B cell (primary cell): ENCODE measurements at regions of chr1 and their contacts with region 1.

Region 1: DNA sequence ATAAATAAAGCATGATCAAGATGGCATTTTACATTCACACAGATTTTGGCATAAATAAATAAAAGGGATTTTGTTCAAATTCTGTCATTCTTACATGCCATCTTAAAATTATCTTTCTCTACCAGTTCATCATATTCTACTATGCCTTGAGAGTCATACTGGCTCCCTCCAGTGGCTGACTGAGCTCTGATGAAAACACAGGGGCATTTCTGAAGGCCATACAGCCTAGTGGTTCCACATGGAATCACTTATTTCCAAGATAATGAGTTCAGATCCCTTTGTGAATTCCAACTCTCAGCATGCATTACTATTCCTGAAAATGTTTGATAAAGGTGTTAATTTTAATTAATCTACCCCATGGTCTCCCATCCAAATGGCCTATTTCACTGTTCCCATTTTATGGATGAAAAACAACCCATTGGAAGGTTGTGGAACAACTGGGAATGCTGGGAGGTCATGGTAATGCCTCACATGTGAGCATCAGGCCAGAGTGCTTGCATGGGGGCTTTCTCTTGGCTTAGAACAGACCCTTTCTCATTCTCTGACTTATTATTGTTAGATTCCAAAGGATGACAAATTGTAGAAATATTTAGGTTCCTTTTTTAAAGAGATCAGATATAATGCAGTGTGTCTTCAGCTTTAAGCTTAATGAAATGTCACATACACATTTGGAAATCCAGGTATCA is 622.4 kb upstream of the PKN2 start:
- DNase-seq: peak; percentile 47
- ATAC-seq: no peak
- H3K4me3 ChIP-seq: no peak overlapping the region
- H3K4me3 Mint-ChIP-seq: no peak overlapping the region
- H3K27ac ChIP-seq: no peak overlapping the region
- H3K27ac Mint-ChIP-seq: no peak overlapping the region
- H3K4me1 ChIP-seq: no peaks in the 10 kb centered on the region
- H3K4me1 Mint-ChIP-seq: peaks cover 3% of the 10 kb centered on the region
- H3K27me3 ChIP-seq: no peaks in the 10 kb centered on the region
- H3K27me3 Mint-ChIP-seq: no peaks in the 10 kb centered on the region
- CTCF ChIP-seq: peak; percentile 53

Region 2: DNA sequence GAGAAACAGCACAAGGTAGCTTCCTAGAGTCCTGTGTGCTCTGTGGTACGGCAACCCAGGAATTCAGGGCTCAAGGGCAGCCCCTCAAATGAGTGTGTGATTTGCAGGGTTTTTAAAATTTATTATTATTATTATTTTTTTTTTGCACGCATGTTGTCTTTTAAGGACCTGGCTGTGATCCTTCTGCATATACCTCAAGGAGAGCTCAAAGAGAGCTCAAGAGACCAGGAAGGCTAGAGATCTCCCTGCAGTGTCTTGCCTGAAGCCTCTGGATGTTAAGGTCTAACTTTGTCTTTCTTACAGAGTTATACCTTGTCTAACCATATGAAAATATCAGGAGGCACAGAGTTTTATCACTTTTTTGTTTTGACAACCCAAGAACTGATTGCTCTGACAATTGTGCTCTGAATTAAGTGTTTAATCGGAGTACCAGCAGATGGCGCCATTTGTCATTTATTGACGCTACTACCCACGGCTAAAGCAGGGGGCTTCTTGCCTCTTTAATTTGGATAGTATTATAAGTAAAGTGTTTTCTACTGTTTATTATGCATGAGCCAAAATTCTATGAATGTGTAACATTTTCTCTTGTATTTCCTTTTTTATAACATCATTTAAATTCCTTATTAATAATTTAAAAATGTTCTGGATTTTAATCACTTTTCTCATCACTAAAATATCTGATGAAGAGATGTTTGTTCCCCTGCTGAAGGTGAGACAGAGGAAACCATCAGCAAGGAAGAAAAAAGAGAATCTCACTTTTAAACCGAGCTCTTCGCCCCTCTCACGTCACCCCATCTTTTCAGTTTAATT is 768.7 kb before region 1 on chr1:
- CTCF ChIA-PET with region 1: interaction called, 20 read pairs
- POLR2A ChIA-PET with region 1: no interaction called
- intact Hi-C with region 1: loop called (anchors 1 kb)
- DNase-seq: peak; percentile 78
- ATAC-seq: peak; percentile 47
- H3K4me3 ChIP-seq: no peak overlapping the region
- H3K4me3 Mint-ChIP-seq: no peak overlapping the region
- H3K27ac ChIP-seq: no peak overlapping the region
- H3K27ac Mint-ChIP-seq: no peak overlapping the region
- H3K4me1 ChIP-seq: no peaks in the 10 kb centered on the region
- H3K4me1 Mint-ChIP-seq: no peaks in the 10 kb centered on the region
- H3K27me3 ChIP-seq: no peaks in the 10 kb centered on the region
- H3K27me3 Mint-ChIP-seq: peaks cover 13% of the 10 kb centered on the region
- CTCF ChIP-seq: peak; percentile 96